ENCODE measurements at regions of chr17 and their contacts with region 1.

Region 1: DNA sequence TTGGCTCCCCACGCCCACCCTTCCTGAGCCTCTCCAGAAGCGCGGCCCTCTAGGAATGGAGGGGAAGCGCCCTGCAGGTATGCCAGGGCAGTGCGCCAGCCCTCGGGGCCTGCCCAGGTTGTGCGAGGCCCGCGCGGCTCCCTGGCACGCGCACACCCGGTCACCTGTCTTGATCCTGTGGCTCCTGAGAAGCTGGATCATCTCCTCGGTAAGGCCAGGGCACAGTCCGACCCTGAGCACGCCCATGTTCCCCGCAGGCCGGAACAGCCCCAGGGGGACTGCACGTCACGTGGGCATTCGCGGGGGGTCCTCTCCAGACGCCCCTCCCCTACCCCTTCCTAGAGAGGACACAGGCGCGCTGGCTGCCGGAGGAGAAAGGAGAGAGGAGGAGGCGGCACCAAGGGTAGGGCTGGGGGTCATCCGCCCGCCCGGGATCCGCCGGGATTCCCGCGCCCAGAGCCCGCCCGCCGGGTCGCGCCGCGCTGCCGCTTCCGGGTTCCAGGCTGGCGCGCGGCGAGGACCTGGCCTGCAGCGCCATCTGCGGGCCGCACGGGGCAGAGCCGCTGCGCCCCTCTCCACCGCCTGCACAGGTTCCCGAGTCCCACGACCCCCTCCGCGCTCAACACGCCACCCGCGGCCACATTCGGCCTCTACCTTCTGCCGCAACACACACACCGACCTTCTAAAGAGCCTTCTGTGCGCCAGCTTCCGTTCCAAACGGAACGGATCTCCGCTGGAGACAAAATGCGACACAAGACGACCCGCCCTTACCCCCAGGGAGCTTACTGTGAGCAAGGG is at the start of gene RAD51D:
- DNase-seq: no peak
- H3K4me3 ChIP-seq: peak within 1 kb of the TSS; percentile 63 to 88 (median 69)
- H3K27ac ChIP-seq: peak within 1 kb of the TSS; percentile 79 to 87 (median 82)
- H3K4me1 ChIP-seq: peaks cover 6 to 35% (median 11%) of the 10 kb centered on the region in 3 donors
- H3K27me3 ChIP-seq: no peaks in the 10 kb centered on the region
- CTCF ChIP-seq: peak; percentile 85 to 99 (median 97)
- POLR2A ChIP-seq: no peak
- total RNA-seq, gene RAD51D: 2.4 to 7.1 (median 6.0) TPM

Region 2: DNA sequence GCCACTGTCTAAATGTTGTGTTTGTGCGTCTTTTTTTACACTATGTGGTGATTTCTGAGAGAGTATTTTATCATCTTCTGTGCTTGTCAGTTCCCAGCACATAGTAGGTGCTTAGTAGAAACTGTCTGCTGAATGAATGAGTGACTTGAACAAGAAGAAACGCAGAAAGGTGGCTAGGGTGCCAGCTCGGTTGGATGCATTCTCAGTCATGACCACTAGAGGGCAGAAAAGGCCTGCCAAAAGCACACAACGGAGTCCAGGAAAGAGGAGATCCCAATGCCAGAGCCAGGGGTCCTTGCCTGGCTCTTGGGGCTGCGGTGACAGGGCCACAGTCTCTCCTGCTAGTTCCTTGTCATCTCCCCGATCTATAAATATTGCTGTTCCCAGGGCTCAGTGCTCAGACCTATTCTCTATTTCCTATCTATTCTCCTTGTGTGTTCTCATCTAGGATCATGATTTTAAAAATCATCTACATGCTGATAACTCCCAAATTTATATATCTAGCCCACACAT is 699.3 kb before region 1 on chr17:
- intact Hi-C with region 1: loop called (anchors 10 kb)
- DNase-seq: no peak
- H3K4me3 ChIP-seq: no peak overlapping the region
- H3K27ac ChIP-seq: no peak overlapping the region
- H3K4me1 ChIP-seq: peaks cover 0 to 6% (median 0%) of the 10 kb centered on the region in 3 donors
- H3K27me3 ChIP-seq: peaks cover 3 to 86% (median 3%) of the 10 kb centered on the region in 4 donors
- CTCF ChIP-seq: peak; percentile 66 to 95 (median 84)
- POLR2A ChIP-seq: no peak

Region 3: GRCh38 chr17:34542700-34543336 is 576.7 kb before region 1 on chr17:
- intact Hi-C with region 1: loop called (anchors 10 kb)
- DNase-seq: no peak
- H3K4me3 ChIP-seq: no peak overlapping the region
- H3K27ac ChIP-seq: no peak overlapping the region
- H3K4me1 ChIP-seq: no peaks in the 10 kb centered on the region
- H3K27me3 ChIP-seq: peaks cover 0 to 60% (median 0%) of the 10 kb centered on the region in 4 donors
- CTCF ChIP-seq: peak; percentile 52 to 80 (median 68)
- POLR2A ChIP-seq: no peak

Region 4: DNA sequence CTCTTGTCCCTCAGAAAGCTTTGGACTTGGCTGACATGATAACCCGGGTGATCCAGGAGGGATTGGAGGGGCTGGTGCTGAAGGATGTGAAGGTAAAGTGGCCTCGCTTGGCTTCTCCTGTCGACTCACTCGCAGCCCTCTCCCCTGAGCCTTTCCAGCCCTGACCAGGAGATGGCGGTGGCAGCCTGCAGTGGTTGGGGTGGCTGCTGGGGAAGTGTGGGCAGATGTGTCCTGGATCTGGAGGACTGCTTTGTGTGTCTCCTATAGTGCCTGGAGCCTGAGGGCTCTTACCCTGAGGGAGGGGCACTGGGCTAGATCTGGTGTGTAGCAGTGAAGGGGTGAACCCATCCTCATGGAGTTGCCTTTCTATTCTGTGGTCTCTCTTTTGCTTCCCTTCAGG is 121.4 kb before region 1 on chr17:
- intact Hi-C with region 1: loop called (anchors 5 kb)
- DNase-seq: peak; percentile 5
- H3K4me3 ChIP-seq: peak overlapping the region in 1 of 4 donors; percentile 5
- H3K27ac ChIP-seq: peak overlapping the region; percentile 47 to 74 (median 72)
- H3K4me1 ChIP-seq: peaks cover 6 to 58% (median 22%) of the 10 kb centered on the region in 3 donors
- H3K27me3 ChIP-seq: no peaks in the 10 kb centered on the region
- CTCF ChIP-seq: peak; percentile 55 to 91 (median 80)
- POLR2A ChIP-seq: no peak

Region 5: GRCh38 chr17:35286120-35286781 is 166.7 kb after region 1 on chr17:
- intact Hi-C with region 1: no loop called
- DNase-seq: no peak
- H3K4me3 ChIP-seq: no peak overlapping the region
- H3K27ac ChIP-seq: no peak overlapping the region
- H3K4me1 ChIP-seq: no peaks in the 10 kb centered on the region
- H3K27me3 ChIP-seq: no peaks in the 10 kb centered on the region
- CTCF ChIP-seq: no peak
- POLR2A ChIP-seq: no peak